Ascending aorta (tissue), 2 donors: ENCODE measurements at regions of chr14 and their contacts with region 1.

Region 1: GRCh38 chr14:88562831-88563686 is at the start of gene ZC3H14:
- DNase-seq: peak; percentile 15 to 89
- H3K4me3 ChIP-seq: peak within 1 kb of the TSS; percentile 93 to 94
- H3K27ac ChIP-seq: peak within 1 kb of the TSS; percentile 80 to 90
- H3K4me1 ChIP-seq: peaks cover 4 to 6% of the 10 kb centered on the region in 2 donors
- H3K27me3 ChIP-seq: no peaks in the 10 kb centered on the region
- CTCF ChIP-seq: no peak
- total RNA-seq, gene ZC3H14: 62.2 TPM

Region 2: GRCh38 chr14:88492272-88493089 is 70.6 kb before region 1 on chr14:
- intact Hi-C with region 1: loop called (anchors 1 kb)
- DNase-seq: peak in 1 of 2 donors; percentile 83
- H3K4me3 ChIP-seq: no peak overlapping the region
- H3K27ac ChIP-seq: no peak overlapping the region
- H3K4me1 ChIP-seq: no peaks in the 10 kb centered on the region
- H3K27me3 ChIP-seq: no peaks in the 10 kb centered on the region
- CTCF ChIP-seq: peak; percentile 80 to 87 (median 84)

Region 3: DNA sequence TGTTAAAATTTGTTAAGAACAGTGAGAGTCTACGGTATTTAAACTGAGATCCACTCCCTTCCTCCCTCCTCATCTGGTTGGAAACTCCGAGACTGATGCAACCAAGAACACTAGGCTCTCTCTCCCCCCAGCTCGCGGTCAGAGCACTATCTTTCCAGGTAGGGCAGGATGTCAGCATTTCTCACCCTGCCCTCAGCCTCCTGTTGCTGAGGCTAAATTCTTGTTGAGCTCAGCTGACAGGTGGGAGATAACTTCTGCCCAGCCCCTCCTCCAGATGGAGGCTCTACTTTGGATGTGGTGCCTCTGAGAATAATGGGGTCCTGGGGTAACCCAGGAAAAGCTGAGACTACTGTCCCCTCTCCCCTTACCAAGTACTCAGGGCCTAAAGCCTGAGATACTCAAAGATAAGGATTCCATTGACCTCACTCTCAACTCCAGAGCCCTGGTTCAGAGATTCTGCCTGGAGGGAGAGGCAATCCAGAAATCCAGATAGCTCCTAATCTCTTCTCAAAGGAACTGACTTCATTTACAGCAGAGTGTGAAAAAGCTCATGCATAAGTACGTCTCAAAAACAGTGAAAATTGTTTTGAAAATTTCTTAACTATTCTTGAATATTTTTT is 119.5 kb after region 1 on chr14:
- intact Hi-C with region 1: no loop called
- DNase-seq: no peak
- H3K4me3 ChIP-seq: no peak overlapping the region
- H3K27ac ChIP-seq: no peak overlapping the region
- H3K4me1 ChIP-seq: no peaks in the 10 kb centered on the region
- H3K27me3 ChIP-seq: no peaks in the 10 kb centered on the region
- CTCF ChIP-seq: no peak